ENCODE measurements at regions of chr6 and their contacts with region 1.

Region 1: DNA sequence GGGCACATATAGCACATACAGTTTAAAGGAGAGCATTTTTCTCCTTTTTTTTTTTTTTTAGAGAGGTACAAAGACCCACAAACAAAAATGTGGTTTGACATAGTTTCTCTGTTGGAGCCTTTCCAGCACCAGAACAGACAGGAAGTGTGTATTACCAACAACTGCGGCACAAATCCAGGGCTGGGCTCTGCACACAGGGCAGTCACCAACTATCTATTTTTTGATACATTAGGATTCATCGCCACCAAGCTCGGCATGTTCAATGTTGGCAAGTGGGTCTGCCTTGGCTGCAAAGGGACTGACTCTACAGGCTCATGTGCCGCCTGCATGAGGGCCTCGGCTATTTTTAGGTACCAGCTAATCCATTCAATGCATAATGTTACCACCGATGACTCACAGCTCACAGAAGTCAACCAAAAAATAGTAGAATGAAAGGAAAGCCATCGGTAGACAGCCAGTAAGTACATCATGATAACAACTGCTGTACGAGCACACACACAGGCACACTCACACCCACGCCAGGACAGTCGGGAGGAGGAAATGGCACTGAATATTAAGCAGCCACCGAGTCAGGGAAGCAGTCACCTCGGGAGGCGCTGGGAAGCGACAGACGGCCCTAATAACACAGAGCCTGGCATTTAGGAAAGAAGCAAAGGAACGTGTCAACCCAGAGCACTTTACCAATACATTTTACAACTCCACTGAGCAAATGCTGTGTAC is 81.6 kb downstream of the GMPR start:
- DNase-seq: peak; percentile 58 to 78
- ATAC-seq: peak; percentile 66 to 91 (median 86)
- H3K4me3 ChIP-seq: peak overlapping the region in 7 of 10 donors; percentile 9 to 32 (median 28)
- H3K27ac ChIP-seq: peak overlapping the region; percentile 63 to 95 (median 89)
- H3K4me1 ChIP-seq: peaks cover 22 to 78% (median 55%) of the 10 kb centered on the region in 9 donors
- H3K27me3 ChIP-seq: no peaks in the 10 kb centered on the region
- CTCF ChIP-seq: no peak

Region 2: GRCh38 chr6:16043171-16044135 is 276.5 kb before region 1 on chr6:
- intact Hi-C with region 1: no loop called
- DNase-seq: no peak
- ATAC-seq: peak in 5 of 8 donors; percentile 12 to 29 (median 20)
- H3K4me3 ChIP-seq: no peak overlapping the region
- H3K27ac ChIP-seq: no peak overlapping the region
- H3K4me1 ChIP-seq: peaks cover 0 to 14% (median 0%) of the 10 kb centered on the region in 9 donors
- H3K27me3 ChIP-seq: no peaks in the 10 kb centered on the region
- CTCF ChIP-seq: no peak

Region 3: DNA sequence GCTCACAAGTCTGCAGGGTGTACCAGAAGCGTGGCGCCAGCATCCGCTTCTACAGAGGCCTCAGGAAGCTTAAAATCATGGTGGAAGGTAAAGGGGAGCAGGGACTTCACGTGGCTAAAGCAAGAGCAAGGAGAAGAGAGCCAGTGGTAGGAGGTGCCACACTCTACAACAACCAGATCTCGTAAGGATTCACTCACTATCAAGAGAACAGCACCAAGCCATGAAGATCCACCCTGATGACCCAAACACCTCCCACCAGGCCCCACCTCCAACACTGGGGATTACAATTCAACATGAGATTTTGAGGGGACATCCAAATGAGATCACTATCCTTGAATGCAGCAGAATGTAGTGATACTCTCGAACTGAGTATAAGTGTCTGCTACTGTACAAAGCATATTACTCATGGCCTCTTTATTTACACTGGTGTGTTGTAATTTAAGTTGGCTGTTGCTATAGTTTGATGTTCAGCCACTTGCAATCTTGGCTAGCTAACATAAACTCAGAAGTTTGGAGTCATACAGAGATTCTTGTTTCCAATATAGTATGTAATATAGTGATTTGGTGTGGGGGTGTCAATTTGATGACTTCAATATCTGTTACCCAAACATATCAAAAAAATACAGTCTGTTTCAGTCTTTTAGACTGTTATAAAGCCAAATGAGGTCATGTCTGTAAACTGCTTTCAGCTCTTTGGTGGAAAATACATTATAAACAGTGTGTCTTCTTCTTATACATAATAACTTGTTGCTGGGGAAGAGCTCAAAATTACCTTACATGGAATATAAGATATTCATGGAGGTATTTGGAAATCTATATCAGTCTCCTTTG is 230.5 kb before region 1 on chr6:
- intact Hi-C with region 1: no loop called
- DNase-seq: no peak
- ATAC-seq: no peak
- H3K4me3 ChIP-seq: no peak overlapping the region
- H3K27ac ChIP-seq: no peak overlapping the region
- H3K4me1 ChIP-seq: peaks cover 0 to 16% (median 0%) of the 10 kb centered on the region in 9 donors
- H3K27me3 ChIP-seq: no peaks in the 10 kb centered on the region
- CTCF ChIP-seq: no peak

Region 4: GRCh38 chr6:16238057-16238962 is 81.7 kb before region 1 on chr6 and contains the start of gene GMPR:
- intact Hi-C with region 1: loop called in 4 of 10 experiments (anchors 5 to 10 kb)
- DNase-seq: peak; percentile 81 to 86
- ATAC-seq: peak; percentile 72 to 90 (median 80)
- H3K4me3 ChIP-seq: peak within 1 kb of the TSS; percentile 46 to 87 (median 76)
- H3K27ac ChIP-seq: peak within 1 kb of the TSS; percentile 77 to 94 (median 86)
- H3K4me1 ChIP-seq: peaks cover 2 to 66% (median 43%) of the 10 kb centered on the region in 9 donors
- H3K27me3 ChIP-seq: no peaks in the 10 kb centered on the region
- CTCF ChIP-seq: peak in 3 of 9 donors; percentile 24 to 35 (median 24)
- total RNA-seq, gene GMPR: 74.1 to 139 (median 96.8) TPM

Region 5: GRCh38 chr6:16391451-16391912 is 71.5 kb after region 1 on chr6:
- intact Hi-C with region 1: no loop called
- DNase-seq: no peak
- ATAC-seq: peak in 5 of 8 donors; percentile 22 to 45 (median 29)
- H3K4me3 ChIP-seq: no peak overlapping the region
- H3K27ac ChIP-seq: peak overlapping the region in 9 of 10 donors; percentile 15 to 75 (median 55)
- H3K4me1 ChIP-seq: peaks cover 0 to 16% (median 12%) of the 10 kb centered on the region in 9 donors
- H3K27me3 ChIP-seq: no peaks in the 10 kb centered on the region
- CTCF ChIP-seq: no peak